CD8-positive, alpha-beta T cell (primary cell): ENCODE measurements at regions of chr19 and their contacts with region 1.

Region 1: GRCh38 chr19:2391118-2391725 is 31.2 kb downstream of the TMPRSS9 start:
- DNase-seq: peak in 7 of 9 experiments; percentile 10 to 83 (median 42)
- ATAC-seq: peak; percentile 57
- H3K4me3 ChIP-seq: no peak overlapping the region
- H3K4me3 Mint-ChIP-seq: no peak overlapping the region
- H3K27ac ChIP-seq: no peak overlapping the region
- H3K27ac Mint-ChIP-seq: no peak overlapping the region
- H3K4me1 ChIP-seq: no peaks in the 10 kb centered on the region
- H3K4me1 Mint-ChIP-seq: peaks cover 12% of the 10 kb centered on the region
- H3K27me3 ChIP-seq: no peaks in the 10 kb centered on the region
- H3K27me3 Mint-ChIP-seq: peaks cover 2% of the 10 kb centered on the region
- CTCF ChIP-seq: peak; percentile 77

Region 2: DNA sequence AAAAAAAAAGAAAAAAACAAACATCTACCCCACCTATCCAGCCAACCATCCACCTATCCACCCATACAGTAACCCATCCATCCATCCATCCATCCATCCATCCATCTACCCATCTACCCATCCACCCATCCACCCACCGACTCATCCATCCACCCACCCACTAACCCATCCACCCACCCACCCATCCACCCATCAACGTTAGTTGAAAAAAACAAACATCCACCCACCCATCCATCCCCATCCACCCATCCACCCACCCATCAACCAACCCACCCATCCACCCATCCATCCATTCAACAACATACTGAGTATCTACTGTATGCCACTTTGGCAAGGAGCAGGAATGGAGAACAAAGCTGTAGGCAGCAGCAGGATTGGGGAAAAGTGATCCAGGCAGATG is 233.8 kb before region 1 on chr19:
- CTCF ChIA-PET with region 1: interaction called, 3 read pairs
- POLR2A ChIA-PET with region 1: no interaction called
- intact Hi-C with region 1: loop called (anchors 2 kb)
- DNase-seq: no peak
- ATAC-seq: no peak
- H3K4me3 ChIP-seq: no peak overlapping the region
- H3K4me3 Mint-ChIP-seq: no peak overlapping the region
- H3K27ac ChIP-seq: no peak overlapping the region
- H3K27ac Mint-ChIP-seq: no peak overlapping the region
- H3K4me1 ChIP-seq: no peaks in the 10 kb centered on the region
- H3K4me1 Mint-ChIP-seq: peaks cover 2% of the 10 kb centered on the region
- H3K27me3 ChIP-seq: no peaks in the 10 kb centered on the region
- H3K27me3 Mint-ChIP-seq: no peaks in the 10 kb centered on the region
- CTCF ChIP-seq: no peak

Region 3: GRCh38 chr19:2261438-2262172 is 129.6 kb before region 1 on chr19:
- CTCF ChIA-PET with region 1: interaction called, 12 read pairs
- POLR2A ChIA-PET with region 1: no interaction called
- intact Hi-C with region 1: no loop called
- DNase-seq: peak in 7 of 9 experiments; percentile 47 to 77 (median 66)
- ATAC-seq: no peak
- H3K4me3 ChIP-seq: no peak overlapping the region
- H3K4me3 Mint-ChIP-seq: no peak overlapping the region
- H3K27ac ChIP-seq: no peak overlapping the region
- H3K27ac Mint-ChIP-seq: no peak overlapping the region
- H3K4me1 ChIP-seq: peaks cover 25% of the 10 kb centered on the region
- H3K4me1 Mint-ChIP-seq: peaks cover 27% of the 10 kb centered on the region
- H3K27me3 ChIP-seq: no peaks in the 10 kb centered on the region
- H3K27me3 Mint-ChIP-seq: no peaks in the 10 kb centered on the region
- CTCF ChIP-seq: peak; percentile 58